ENCODE measurements at regions of chr10 and their contacts with region 1.

Region 1: DNA sequence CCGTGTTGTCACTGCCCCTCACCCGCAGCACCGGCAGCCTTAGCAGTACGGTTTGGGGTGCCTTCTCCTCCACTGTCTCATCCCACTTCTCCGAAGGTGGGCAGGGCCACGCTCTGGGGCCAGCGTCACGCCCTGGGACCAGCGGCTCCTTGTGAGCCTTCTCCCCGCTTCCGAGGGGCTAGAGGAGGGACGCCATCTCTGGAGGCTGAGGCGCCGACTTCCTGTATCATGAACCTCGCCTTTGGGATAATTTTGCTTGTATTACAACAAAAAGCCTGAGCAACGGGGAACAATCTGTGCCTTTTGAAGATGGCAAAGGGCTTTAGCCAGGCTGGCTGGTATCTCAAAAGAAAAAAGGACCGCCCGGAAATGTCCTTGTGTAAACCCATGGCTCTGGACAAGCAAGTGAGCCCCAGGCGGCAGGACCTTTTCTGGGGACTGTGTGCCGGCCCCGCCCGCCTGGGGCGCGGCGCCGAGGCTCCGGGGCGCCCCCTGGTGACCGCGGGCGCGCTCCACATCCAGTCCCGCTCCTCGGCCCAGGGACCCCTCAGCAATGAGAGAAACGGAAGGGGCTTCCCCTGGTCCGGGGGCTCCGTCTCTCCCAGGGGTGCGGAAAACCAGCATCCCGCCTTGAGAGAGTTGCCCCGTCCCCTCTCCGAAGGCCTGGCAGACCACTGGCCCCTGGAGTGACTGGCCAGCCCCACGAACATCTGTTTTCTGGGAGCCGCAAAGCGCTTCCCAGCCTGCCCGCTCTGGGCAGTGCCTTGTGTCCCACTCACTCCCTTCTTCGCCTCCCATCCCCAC is 3.8 kb downstream of the DEPP1 start:
- DNase-seq: no peak
- ATAC-seq: peak; percentile 89
- H3K4me3 ChIP-seq: peak overlapping the region; percentile 22
- H3K27ac ChIP-seq: peak overlapping the region; percentile 78
- H3K4me1 ChIP-seq: peaks cover 41% of the 10 kb centered on the region
- H3K27me3 ChIP-seq: no peaks in the 10 kb centered on the region
- CTCF ChIP-seq: peak; percentile 93
- POLR2A ChIP-seq: peak; percentile 24; the same call in 1 of the 2 replicates
- RAD21 ChIP-seq: peak; percentile 71

Region 2: DNA sequence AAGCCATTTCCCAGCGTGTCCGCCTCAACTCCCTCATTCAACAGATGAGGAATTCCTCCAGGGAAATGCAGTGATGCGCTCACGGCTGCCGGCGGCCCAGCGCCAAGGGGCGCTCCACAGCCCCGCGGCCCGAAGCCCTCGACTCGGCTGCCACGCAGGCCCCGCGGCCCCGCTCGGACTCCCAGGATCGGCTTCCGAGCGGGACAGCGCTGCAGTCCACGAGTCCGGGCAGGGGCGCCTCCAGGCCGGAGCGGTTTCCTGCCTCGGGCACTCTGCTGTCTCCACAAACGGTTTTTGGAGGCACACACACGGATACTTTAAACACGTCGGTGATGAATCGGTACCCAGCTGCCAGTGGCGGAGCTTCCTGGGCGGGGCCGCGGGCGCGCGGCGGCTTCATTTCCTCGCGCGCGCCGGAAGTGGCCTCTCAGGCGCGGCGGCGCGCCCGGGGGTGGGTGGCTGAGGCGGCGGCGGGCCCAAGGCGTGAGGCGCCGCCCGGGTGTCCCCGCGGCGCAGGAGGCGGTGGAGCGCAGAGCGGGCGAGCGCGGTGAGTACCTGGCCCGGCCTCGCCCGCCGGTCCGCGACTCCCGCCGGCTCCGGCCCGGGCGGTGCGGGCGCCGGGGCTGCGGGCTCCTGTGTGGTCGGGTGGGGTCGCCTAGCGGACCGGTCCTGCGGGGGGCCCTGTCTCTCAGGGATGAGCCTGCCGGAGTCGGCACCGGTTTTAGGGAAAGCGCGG is 1836.6 kb before region 1 on chr10 and contains the start of gene CSGALNACT2:
- CTCF ChIA-PET with region 1: no interaction called
- POLR2A ChIA-PET with region 1: no interaction called
- dilution Hi-C with region 1: no loop called
- in situ Hi-C with region 1: loop called (anchors 25 kb)
- intact Hi-C with region 1: no loop called
- DNase-seq: peak; percentile 86
- ATAC-seq: peak; percentile 68
- H3K4me3 ChIP-seq: peak within 1 kb of the TSS; percentile 98
- H3K27ac ChIP-seq: peak within 1 kb of the TSS; percentile 94
- H3K4me1 ChIP-seq: peaks cover 6% of the 10 kb centered on the region
- H3K27me3 ChIP-seq: no peaks in the 10 kb centered on the region; the same call in 1 of the 2 replicates
- CTCF ChIP-seq: 0 out of 2 replicates have a peak, but pooled peaks have one; percentile 5
- POLR2A ChIP-seq: peak; percentile 84
- RAD21 ChIP-seq: no peak
- total RNA-seq, gene CSGALNACT2: 6.5 and 11.4 TPM in 2 replicates

Region 3: GRCh38 chr10:43407576-43408330 is 1567.1 kb before region 1 on chr10:
- CTCF ChIA-PET with region 1: no interaction called
- POLR2A ChIA-PET with region 1: no interaction called
- dilution Hi-C with region 1: no loop called
- in situ Hi-C with region 1: loop called (anchors 25 kb)
- intact Hi-C with region 1: no loop called
- DNase-seq: peak; percentile 89
- ATAC-seq: peak; percentile 36
- H3K4me3 ChIP-seq: peak overlapping the region; percentile 82
- H3K27ac ChIP-seq: peak overlapping the region; percentile 96
- H3K4me1 ChIP-seq: peaks cover 2% of the 10 kb centered on the region; the same call in 1 of the 2 replicates
- H3K27me3 ChIP-seq: no peaks in the 10 kb centered on the region
- CTCF ChIP-seq: peak; percentile 43
- POLR2A ChIP-seq: peak; percentile 94
- RAD21 ChIP-seq: no peak

Region 4: DNA sequence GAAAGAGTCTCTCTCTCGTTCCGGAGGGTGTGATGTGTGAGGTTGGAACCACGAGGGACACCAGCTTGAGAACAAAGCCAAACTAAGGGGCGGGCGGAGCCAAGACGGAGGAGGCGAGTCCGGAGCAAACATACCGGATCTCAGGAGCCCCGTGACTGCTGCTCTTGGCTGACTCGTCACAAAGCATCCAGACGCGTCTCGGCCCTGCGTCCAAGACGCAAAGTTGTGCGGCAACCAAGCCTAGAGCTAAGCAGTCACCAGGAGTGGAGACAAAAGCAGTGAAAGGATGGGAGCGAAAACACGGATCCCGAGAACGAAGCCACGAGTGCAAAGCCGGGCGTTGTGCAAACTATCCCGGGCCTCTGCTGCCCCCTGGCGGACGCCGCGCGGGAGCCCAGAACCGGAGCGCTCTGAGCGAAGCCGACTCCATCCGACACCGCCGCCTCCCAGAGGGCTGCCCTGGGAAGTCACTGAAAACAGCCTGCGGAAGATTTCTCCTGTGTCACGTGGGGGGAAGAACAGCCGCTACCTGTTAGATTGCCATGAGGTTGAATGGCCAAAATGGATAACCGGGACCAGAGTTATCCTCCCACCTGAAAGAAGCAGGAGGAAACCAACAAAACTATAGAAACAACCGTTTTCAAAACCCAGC is 110.1 kb before region 1 on chr10:
- CTCF ChIA-PET with region 1: no interaction called
- POLR2A ChIA-PET with region 1: no interaction called
- dilution Hi-C with region 1: no loop called
- in situ Hi-C with region 1: no loop called
- intact Hi-C with region 1: no loop called
- DNase-seq: peak; percentile 75
- ATAC-seq: peak; percentile 94
- H3K4me3 ChIP-seq: peak overlapping the region; percentile 68
- H3K27ac ChIP-seq: peak overlapping the region; percentile 65
- H3K4me1 ChIP-seq: peaks cover 4% of the 10 kb centered on the region; the same call in 1 of the 2 replicates
- H3K27me3 ChIP-seq: peaks cover 3% of the 10 kb centered on the region; the same call in 1 of the 2 replicates
- CTCF ChIP-seq: peak; percentile 98
- POLR2A ChIP-seq: no peak
- RAD21 ChIP-seq: peak; percentile 94

Region 5: DNA sequence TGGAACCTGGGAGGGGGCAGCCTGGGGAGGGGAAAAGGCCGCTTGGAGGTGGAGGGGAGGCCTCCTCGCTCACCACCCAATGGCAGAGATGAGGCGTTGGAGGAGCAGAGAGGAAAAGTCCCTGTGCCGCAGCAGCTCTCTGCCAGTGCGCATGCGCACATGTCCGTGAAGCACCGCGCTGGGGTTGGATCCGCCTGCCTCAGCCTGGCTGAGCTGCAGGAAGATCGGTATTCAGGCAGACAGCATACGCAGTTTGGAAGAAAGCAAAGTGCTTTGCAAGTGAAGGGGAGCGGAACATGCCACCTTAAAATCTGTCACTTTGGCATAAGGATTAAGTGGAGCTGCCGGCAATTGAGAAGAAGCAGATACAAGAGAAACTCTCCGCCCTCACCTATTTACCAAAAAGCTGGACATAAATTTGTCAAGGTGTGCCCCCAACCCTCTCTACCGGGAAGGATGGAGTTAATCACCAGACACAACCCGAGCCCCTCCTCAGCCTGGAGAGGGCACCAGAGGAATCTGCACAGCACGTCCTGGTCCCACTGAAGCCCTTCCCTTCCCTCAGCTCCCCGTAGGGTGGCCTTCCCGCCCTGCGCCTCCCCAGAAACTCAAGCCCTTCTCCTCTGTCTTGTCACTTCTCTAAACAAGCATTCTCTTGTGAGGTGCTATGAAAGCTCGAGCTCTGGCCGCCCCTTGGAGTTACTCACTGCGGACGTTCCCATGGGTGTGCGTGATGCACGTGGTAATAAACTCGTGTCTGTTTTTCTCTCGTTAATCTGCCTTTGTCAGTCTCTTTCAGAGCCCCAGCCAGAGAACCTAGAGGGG is 95.9 kb before region 1 on chr10:
- CTCF ChIA-PET with region 1: no interaction called
- POLR2A ChIA-PET with region 1: no interaction called
- dilution Hi-C with region 1: no loop called
- in situ Hi-C with region 1: no loop called
- intact Hi-C with region 1: no loop called
- DNase-seq: peak; percentile 82
- ATAC-seq: peak; percentile 97
- H3K4me3 ChIP-seq: peak overlapping the region; percentile 13
- H3K27ac ChIP-seq: no peak overlapping the region
- H3K4me1 ChIP-seq: peaks cover 9% of the 10 kb centered on the region
- H3K27me3 ChIP-seq: peaks cover 35% of the 10 kb centered on the region
- CTCF ChIP-seq: no peak
- POLR2A ChIP-seq: no peak
- RAD21 ChIP-seq: 0 out of 2 replicates have a peak, but pooled peaks have one; percentile 5

Region 6: GRCh38 chr10:44925224-44925623 is 49.6 kb before region 1 on chr10:
- CTCF ChIA-PET with region 1: no interaction called
- POLR2A ChIA-PET with region 1: no interaction called
- dilution Hi-C with region 1: no loop called
- in situ Hi-C with region 1: no loop called
- intact Hi-C with region 1: no loop called
- DNase-seq: peak; percentile 6
- ATAC-seq: no peak
- H3K4me3 ChIP-seq: no peak overlapping the region
- H3K27ac ChIP-seq: no peak overlapping the region
- H3K4me1 ChIP-seq: no peaks in the 10 kb centered on the region
- H3K27me3 ChIP-seq: peaks cover 33% of the 10 kb centered on the region
- CTCF ChIP-seq: 0 out of 2 replicates have a peak, but pooled peaks have one; percentile 10
- POLR2A ChIP-seq: no peak
- RAD21 ChIP-seq: no peak

Region 7: DNA sequence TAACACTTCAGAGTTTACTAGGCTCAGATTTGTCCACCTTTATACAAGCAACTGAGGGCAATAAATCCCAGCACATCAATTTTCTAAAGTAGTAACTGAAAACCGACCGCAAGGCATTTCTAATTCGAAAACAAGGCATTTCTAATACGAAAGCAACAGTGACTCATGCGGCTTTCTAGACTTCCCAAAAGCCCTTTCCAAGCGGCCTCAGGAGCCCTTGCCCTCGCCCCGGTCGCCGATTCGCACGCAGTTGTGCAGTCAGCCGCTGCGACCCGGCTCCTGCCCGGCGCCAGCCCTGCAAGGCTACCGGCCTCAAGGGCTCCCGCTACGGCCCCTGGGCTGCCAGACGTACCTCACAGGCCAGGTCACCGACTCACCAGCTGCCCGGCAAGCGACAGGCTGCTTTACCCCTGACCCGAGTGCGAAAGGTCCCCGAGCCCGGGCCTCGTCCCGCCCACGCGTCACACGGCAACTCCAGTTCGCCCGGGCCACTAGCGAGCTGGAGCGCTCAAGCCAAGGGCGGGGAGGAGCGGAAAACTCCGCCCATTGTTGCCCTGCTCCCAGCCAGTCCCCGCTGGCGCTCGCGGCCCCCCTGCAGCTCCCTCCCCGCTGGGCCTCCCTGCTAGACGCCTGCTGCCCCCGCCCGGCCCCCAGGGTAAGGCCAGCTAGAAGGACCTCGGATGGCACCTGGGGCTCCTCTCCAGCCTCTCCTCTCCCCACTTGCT is 1048.3 kb after region 1 on chr10:
- CTCF ChIA-PET with region 1: no interaction called
- POLR2A ChIA-PET with region 1: no interaction called
- dilution Hi-C with region 1: no loop called
- in situ Hi-C with region 1: loop called (anchors 25 kb)
- intact Hi-C with region 1: no loop called
- DNase-seq: peak; percentile 93
- ATAC-seq: peak; percentile 96
- H3K4me3 ChIP-seq: peak overlapping the region; percentile 82
- H3K27ac ChIP-seq: peak overlapping the region; percentile 84
- H3K4me1 ChIP-seq: peaks cover 33% of the 10 kb centered on the region
- H3K27me3 ChIP-seq: no peaks in the 10 kb centered on the region
- CTCF ChIP-seq: peak; percentile 35; the same call in 1 of the 2 replicates
- POLR2A ChIP-seq: peak; percentile 68
- RAD21 ChIP-seq: peak; percentile 42

Region 8: GRCh38 chr10:46544989-46545791 is 1570.4 kb after region 1 on chr10:
- CTCF ChIA-PET with region 1: no interaction called
- POLR2A ChIA-PET with region 1: no interaction called
- dilution Hi-C with region 1: no loop called
- in situ Hi-C with region 1: loop called (anchors 25 kb)
- intact Hi-C with region 1: no loop called
- DNase-seq: no peak
- ATAC-seq: no peak; the same call in 1 of the 2 replicates
- H3K4me3 ChIP-seq: no peak overlapping the region
- H3K27ac ChIP-seq: no peak overlapping the region
- H3K4me1 ChIP-seq: peaks cover 10% of the 10 kb centered on the region
- H3K27me3 ChIP-seq: peaks cover 2% of the 10 kb centered on the region
- CTCF ChIP-seq: peak; percentile 48
- POLR2A ChIP-seq: no peak
- RAD21 ChIP-seq: peak; percentile 49

Measured in IMR-90 (cell line).